Stomach (tissue), 19 donors: ENCODE measurements at regions of chr22 and their contacts with region 1.

Region 1: GRCh38 chr22:32528984-32529982 is 54.7 kb downstream of the FBXO7 start:
- DNase-seq: peak; percentile 81 to 95
- H3K4me3 ChIP-seq: peak overlapping the region in 1 of 4 donors; percentile 16
- H3K27ac ChIP-seq: peak overlapping the region in 4 of 5 donors; percentile 50 to 75 (median 68)
- H3K4me1 ChIP-seq: peaks cover 25 to 34% (median 30%) of the 10 kb centered on the region in 4 donors
- H3K27me3 ChIP-seq: peaks cover 0 to 25% (median 0%) of the 10 kb centered on the region in 3 donors
- CTCF ChIP-seq: peak in 5 of 7 experiments; percentile 71 to 93 (median 85)
- EP300 ChIP-seq: no peak
- POLR2A ChIP-seq: no peak

Region 2: GRCh38 chr22:32396746-32397145 is 132.5 kb before region 1 on chr22:
- intact Hi-C with region 1: no loop called
- DNase-seq: no peak
- H3K4me3 ChIP-seq: no peak overlapping the region
- H3K27ac ChIP-seq: no peak overlapping the region
- H3K4me1 ChIP-seq: no peaks in the 10 kb centered on the region
- H3K27me3 ChIP-seq: no peaks in the 10 kb centered on the region
- CTCF ChIP-seq: no peak
- EP300 ChIP-seq: no peak
- POLR2A ChIP-seq: no peak

Region 3: DNA sequence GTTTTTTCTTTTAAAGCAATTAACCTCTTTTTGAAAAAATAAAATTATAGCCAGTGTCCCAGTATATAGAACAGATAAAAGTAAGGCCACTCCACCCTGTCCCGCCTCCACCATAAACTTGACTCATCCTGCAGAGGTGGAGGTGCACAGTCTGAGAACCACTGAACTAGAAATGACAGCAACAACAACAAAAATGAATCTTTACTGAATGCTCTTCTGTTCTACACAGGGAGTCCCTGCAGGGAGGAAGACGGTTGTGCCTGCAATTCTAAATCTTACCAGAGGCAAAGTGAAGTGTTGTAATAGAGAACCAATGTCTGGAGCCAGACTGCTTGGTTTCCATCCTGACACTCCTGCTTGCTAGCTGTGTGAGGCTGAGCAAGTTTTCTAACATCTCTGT is 107.6 kb after region 1 on chr22:
- intact Hi-C with region 1: loop called (anchors 10 kb)
- DNase-seq: no peak
- H3K4me3 ChIP-seq: no peak overlapping the region
- H3K27ac ChIP-seq: no peak overlapping the region
- H3K4me1 ChIP-seq: no peaks in the 10 kb centered on the region
- H3K27me3 ChIP-seq: no peaks in the 10 kb centered on the region
- CTCF ChIP-seq: no peak
- EP300 ChIP-seq: no peak
- POLR2A ChIP-seq: no peak

Region 4: GRCh38 chr22:32796865-32797573 is 267.7 kb after region 1 on chr22:
- intact Hi-C with region 1: loop called (anchors 10 kb)
- DNase-seq: peak; percentile 72 to 89
- H3K4me3 ChIP-seq: no peak overlapping the region
- H3K27ac ChIP-seq: peak overlapping the region in 1 of 5 donors; percentile 43
- H3K4me1 ChIP-seq: peaks cover 5 to 27% (median 19%) of the 10 kb centered on the region in 4 donors
- H3K27me3 ChIP-seq: peaks cover 0 to 16% (median 13%) of the 10 kb centered on the region in 3 donors
- CTCF ChIP-seq: peak in 5 of 7 experiments; percentile 73 to 94 (median 87)
- EP300 ChIP-seq: no peak
- POLR2A ChIP-seq: no peak

Region 5: GRCh38 chr22:32996702-32997101 is 467.4 kb after region 1 on chr22:
- intact Hi-C with region 1: loop called (anchors 5 kb)
- DNase-seq: peak in 1 of 2 donors; percentile 58
- H3K4me3 ChIP-seq: no peak overlapping the region
- H3K27ac ChIP-seq: peak overlapping the region in 1 of 5 donors; percentile 22
- H3K4me1 ChIP-seq: peaks cover 0 to 19% (median 7%) of the 10 kb centered on the region in 4 donors
- H3K27me3 ChIP-seq: peaks cover 0 to 19% (median 0%) of the 10 kb centered on the region in 3 donors
- CTCF ChIP-seq: no peak
- EP300 ChIP-seq: no peak
- POLR2A ChIP-seq: no peak